Left colon (tissue), 2 donors: ENCODE measurements at regions of chr18 and their contacts with region 1.

Region 1: DNA sequence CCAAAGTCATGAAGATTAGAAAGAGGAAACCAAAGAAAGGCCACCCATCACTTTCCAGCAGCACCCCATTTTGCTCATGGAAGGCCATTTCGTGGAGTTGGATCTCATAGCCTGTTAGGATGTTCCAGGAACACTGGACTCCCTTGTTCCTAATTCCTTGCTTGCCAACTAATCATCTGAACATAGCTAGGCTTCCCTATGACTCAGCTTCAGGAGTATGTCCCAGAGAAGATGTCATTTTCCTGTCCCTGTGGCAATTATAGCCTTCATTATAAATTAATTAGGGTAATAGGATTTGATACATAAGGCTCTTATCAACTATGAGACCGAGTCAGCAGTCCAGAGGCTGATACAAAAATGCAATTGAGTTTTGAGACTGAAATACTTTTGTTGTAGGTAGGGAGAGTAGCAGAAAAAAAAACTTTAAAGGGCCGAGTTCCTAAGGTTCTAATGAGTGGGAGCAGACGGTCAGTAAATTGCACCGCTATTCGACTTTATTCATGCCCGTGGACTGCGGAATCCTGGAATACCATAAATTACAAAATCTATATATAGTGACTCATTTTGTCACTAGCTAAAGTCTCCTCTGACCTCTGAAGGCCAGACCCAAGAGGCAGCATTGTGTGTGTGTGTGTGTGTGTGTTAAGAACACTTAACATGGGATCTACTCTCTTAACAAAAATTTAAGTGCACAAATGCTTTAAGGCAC is 311.8 kb downstream of the FBXO15 start:
- DNase-seq: no peak
- ATAC-seq: no peak

Region 2: DNA sequence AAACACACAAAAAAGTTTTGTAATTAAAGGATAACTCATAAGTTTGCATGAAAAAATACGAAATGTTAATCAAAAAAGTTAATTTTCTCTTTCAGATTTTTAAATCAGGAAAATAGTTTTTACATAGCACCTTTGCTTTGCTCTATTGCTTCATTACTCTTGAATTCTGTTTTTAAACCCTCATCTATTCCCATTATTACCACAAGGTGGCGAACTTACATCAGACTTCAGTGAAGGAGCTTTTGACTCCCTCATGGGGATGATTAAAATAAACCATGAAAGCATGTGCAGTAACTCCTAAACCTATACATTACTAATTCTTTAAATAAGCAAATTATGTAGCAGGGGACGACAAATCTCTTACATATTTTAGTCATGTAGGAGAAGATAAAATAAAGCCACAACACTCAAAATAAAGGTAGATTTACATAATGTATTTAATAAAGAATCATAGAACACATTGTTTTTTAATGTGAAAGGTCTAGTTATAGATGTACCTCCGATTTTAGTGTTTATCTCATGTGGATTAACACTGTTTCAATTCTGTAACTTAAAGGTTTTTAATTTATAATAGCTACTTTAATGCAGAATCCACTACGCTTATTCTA is 1073.2 kb before region 1 on chr18:
- intact Hi-C with region 1: loop called in 1 of 2 experiments (anchors 5 kb)
- DNase-seq: no peak
- ATAC-seq: no peak